GM13977 (cell line): ENCODE measurements at regions of chr4 and their contacts with region 1.

Region 1: GRCh38 chr4:146333187-146333894 is 119.0 kb downstream of the REELD1 start:
- DNase-seq: peak; percentile 22
- CTCF ChIP-seq: no peak

Region 2: DNA sequence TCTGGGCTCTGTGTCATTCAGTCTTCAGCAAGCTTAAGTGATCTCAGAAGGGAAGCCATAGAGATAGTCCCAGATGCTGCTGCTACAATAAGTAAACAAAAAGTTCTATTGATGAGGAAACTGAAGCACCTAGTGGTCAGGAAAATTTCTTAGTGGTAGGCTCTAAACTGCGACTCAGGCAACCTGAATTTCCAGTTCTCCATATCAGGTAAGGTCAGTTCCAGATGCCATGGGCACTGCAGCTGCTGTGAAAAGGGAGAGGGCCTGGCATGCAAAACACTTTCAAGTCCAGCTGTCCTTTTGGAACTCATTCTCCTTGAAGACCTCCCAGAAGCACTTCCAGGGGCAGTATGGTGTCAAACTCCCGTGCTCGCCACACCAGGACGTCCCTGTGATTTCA is 72.8 kb before region 1 on chr4:
- in situ Hi-C with region 1: no loop called
- DNase-seq: no peak
- CTCF ChIP-seq: no peak

Region 3: GRCh38 chr4:146916479-146917076 is 583.2 kb after region 1 on chr4:
- in situ Hi-C with region 1: loop called (anchors 10 kb)
- DNase-seq: peak; percentile 12
- CTCF ChIP-seq: peak; percentile 65